Esophagus muscularis mucosa (tissue), 4 donors: ENCODE measurements at regions of chrX and their contacts with region 1.

Region 1: GRCh38 chrX:318739-319578 is at the start of gene GTPBP6:
- DNase-seq: peak; percentile 100
- H3K4me3 ChIP-seq: peak within 1 kb of the TSS; percentile 94 to 99 (median 96)
- H3K27ac ChIP-seq: peak within 1 kb of the TSS; percentile 87 to 99 (median 98)
- H3K4me1 ChIP-seq: peaks cover 20 to 51% (median 39%) of the 10 kb centered on the region in 4 donors
- H3K27me3 ChIP-seq: peaks cover 0 to 1% (median 0%) of the 10 kb centered on the region in 4 donors
- CTCF ChIP-seq: peak in 1 of 3 experiments; percentile 13
- EP300 ChIP-seq: no peak
- POLR2A ChIP-seq: peak; percentile 37
- total RNA-seq, gene GTPBP6: 31.6 to 61.4 (median 55.5) TPM

Region 2: GRCh38 chrX:283115-283845 is 35.7 kb before region 1 on chrX:
- intact Hi-C with region 1: loop called (anchors 5 kb)
- DNase-seq: peak; percentile 99
- H3K4me3 ChIP-seq: peak overlapping the region; percentile 57 to 63 (median 60)
- H3K27ac ChIP-seq: peak overlapping the region; percentile 62 to 84 (median 72)
- H3K4me1 ChIP-seq: peaks cover 0 to 33% (median 20%) of the 10 kb centered on the region in 4 donors
- H3K27me3 ChIP-seq: no peaks in the 10 kb centered on the region
- CTCF ChIP-seq: no peak
- EP300 ChIP-seq: no peak
- POLR2A ChIP-seq: no peak

Region 3: GRCh38 chrX:386768-387575 is 68.0 kb after region 1 on chrX and contains the start of gene PPP2R3B:
- intact Hi-C with region 1: loop called (anchors 2 kb)
- DNase-seq: peak; percentile 99
- H3K4me3 ChIP-seq: peak within 1 kb of the TSS; percentile 76 to 100 (median 84)
- H3K27ac ChIP-seq: peak within 1 kb of the TSS; percentile 95 to 99 (median 98)
- H3K4me1 ChIP-seq: peaks cover 6 to 19% (median 17%) of the 10 kb centered on the region in 4 donors
- H3K27me3 ChIP-seq: no peaks in the 10 kb centered on the region
- CTCF ChIP-seq: peak in 1 of 3 experiments; percentile 8
- EP300 ChIP-seq: no peak
- POLR2A ChIP-seq: peak; percentile 34
- total RNA-seq, gene PPP2R3B: 4.0 to 8.3 (median 5.4) TPM